Panc1 (cell line): ENCODE measurements at regions of chr3 and their contacts with region 1.

Region 1: GRCh38 chr3:159114582-159114981 is 312.7 kb downstream of the MFSD1 start:
- DNase-seq: no peak
- ATAC-seq: no peak
- H3K4me3 ChIP-seq: no peak overlapping the region
- H3K27ac ChIP-seq: no peak overlapping the region
- H3K4me1 ChIP-seq: no peaks in the 10 kb centered on the region
- H3K27me3 ChIP-seq: 0 out of 2 replicates have a peak, but pooled peaks cover 5% of the 10 kb centered on the region
- CTCF ChIP-seq: no peak

Region 2: DNA sequence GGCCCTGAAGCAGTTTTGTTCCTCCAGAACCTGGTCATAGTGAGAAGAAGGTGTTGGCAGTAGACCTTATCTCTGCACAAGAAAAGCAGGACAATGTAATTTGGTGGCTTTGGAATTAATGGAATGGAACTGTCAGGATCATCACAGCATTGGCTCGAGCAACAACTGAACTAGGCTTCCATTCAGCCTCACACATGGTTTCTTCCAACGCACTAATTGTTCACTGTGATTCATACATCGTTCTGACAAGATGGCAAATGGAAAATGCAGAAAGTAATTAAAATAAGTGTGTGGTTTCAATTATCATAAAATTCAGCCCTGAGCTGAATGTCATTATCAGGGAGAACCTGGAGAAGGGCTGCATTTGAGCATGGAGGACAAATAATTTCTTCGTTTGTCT is 232.1 kb before region 1 on chr3:
- CTCF ChIA-PET with region 1: no interaction called
- POLR2A ChIA-PET with region 1: no interaction called
- in situ Hi-C with region 1: no loop called
- intact Hi-C with region 1: no loop called
- DNase-seq: no peak
- ATAC-seq: no peak
- H3K4me3 ChIP-seq: no peak overlapping the region
- H3K27ac ChIP-seq: no peak overlapping the region
- H3K4me1 ChIP-seq: no peaks in the 10 kb centered on the region
- H3K27me3 ChIP-seq: 0 out of 2 replicates have a peak, but pooled peaks cover 2% of the 10 kb centered on the region
- CTCF ChIP-seq: no peak

Region 3: DNA sequence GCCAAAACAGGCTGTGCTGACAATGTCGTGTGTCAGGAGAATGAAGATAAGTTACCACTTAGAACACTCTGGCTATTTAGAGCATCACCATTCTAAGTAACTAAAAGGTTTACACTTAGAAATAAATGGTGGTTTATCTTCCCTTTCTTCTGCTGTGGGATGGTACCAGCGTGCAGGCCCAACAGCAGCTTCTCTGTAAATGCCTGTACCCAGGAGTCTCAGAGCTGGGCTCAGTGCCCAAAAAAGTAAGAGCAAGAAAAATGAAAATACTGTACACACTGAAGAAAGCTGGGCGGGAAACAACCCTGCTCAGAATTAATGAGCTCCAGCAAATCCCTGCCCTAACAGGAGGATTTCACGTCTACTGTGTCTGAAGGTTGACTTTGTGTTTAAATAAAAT is 106.2 kb before region 1 on chr3:
- CTCF ChIA-PET with region 1: no interaction called
- POLR2A ChIA-PET with region 1: no interaction called
- in situ Hi-C with region 1: no loop called
- intact Hi-C with region 1: no loop called
- DNase-seq: no peak
- ATAC-seq: no peak
- H3K4me3 ChIP-seq: no peak overlapping the region
- H3K27ac ChIP-seq: no peak overlapping the region
- H3K4me1 ChIP-seq: no peaks in the 10 kb centered on the region
- H3K27me3 ChIP-seq: peaks cover 2% of the 10 kb centered on the region; the same call in 1 of the 2 replicates
- CTCF ChIP-seq: no peak

Region 4: GRCh38 chr3:159091936-159092335 is 22.6 kb before region 1 on chr3:
- CTCF ChIA-PET with region 1: no interaction called
- POLR2A ChIA-PET with region 1: no interaction called
- in situ Hi-C with region 1: no loop called
- intact Hi-C with region 1: no loop called
- DNase-seq: no peak
- ATAC-seq: no peak
- H3K4me3 ChIP-seq: no peak overlapping the region
- H3K27ac ChIP-seq: no peak overlapping the region
- H3K4me1 ChIP-seq: no peaks in the 10 kb centered on the region
- H3K27me3 ChIP-seq: no peaks in the 10 kb centered on the region
- CTCF ChIP-seq: peak; percentile 15; the same call in 1 of the 2 replicates

Region 5: DNA sequence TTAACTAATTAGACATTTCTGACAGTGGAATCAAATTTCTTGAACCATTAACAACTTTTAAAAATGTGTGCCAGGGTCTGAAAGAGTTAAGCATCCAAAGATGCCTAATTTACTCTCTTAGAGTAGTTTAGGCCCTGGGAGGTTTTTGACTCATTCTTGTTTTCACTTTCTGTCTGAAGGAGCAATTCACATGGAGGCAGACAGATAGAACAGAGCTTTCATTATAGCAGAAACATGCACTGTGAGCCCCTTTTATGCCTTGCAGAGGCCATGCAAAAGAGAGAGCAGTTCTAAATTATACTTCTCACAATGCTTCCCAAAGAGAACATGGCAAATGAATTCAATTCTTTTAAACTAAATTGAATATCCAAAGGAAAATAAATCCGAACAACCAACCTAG is 242.0 kb after region 1 on chr3:
- CTCF ChIA-PET with region 1: no interaction called
- POLR2A ChIA-PET with region 1: no interaction called
- in situ Hi-C with region 1: no loop called
- intact Hi-C with region 1: no loop called
- DNase-seq: no peak
- ATAC-seq: no peak
- H3K4me3 ChIP-seq: no peak overlapping the region
- H3K27ac ChIP-seq: no peak overlapping the region
- H3K4me1 ChIP-seq: no peaks in the 10 kb centered on the region
- H3K27me3 ChIP-seq: no peaks in the 10 kb centered on the region
- CTCF ChIP-seq: no peak

Region 6: GRCh38 chr3:159378396-159379194 is 264.0 kb after region 1 on chr3:
- CTCF ChIA-PET with region 1: no interaction called
- POLR2A ChIA-PET with region 1: interaction called, 17 read pairs
- in situ Hi-C with region 1: no loop called
- intact Hi-C with region 1: no loop called
- DNase-seq: no peak
- ATAC-seq: no peak
- H3K4me3 ChIP-seq: no peak overlapping the region
- H3K27ac ChIP-seq: no peak overlapping the region
- H3K4me1 ChIP-seq: no peaks in the 10 kb centered on the region
- H3K27me3 ChIP-seq: no peaks in the 10 kb centered on the region
- CTCF ChIP-seq: no peak